ENCODE measurements at regions of chr1 and their contacts with region 1.

Region 1: DNA sequence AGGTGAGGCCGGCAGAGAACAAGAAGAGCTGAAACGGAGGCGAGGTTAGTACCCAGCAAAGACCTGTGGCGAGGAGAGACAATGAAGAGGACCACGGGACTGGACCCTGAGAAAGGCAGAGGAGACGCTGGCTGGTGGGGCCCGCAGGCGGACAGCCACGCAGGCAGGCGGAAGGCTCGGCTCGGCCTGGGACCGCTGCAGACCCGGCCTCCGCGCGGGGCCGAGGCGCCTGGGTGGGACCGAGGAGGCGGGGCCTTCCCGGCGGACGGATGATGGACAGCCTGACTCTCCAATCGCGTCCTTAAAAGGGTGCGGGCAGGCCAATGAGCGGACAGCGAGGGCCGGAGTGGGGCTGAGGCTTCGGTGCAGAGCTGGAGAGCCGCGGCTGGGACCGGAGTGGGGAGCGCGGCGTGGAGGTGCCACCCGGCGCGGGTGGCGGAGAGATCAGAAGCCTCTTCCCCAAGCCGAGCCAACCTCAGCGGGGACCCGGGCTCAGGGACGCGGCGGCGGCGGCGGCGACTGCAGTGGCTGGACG is at the start of gene MPZL1:
- DNase-seq: peak; percentile 92 to 98 (median 96)
- ATAC-seq: peak; percentile 96 to 99 (median 98)
- H3K4me3 ChIP-seq: peak within 1 kb of the TSS; percentile 88 to 97 (median 92)
- H3K27ac ChIP-seq: peak within 1 kb of the TSS; percentile 74 to 88 (median 82)
- H3K4me1 ChIP-seq: peaks cover 0 to 17% (median 14%) of the 10 kb centered on the region in 3 donors
- H3K27me3 ChIP-seq: no peaks in the 10 kb centered on the region
- CTCF ChIP-seq: no peak
- total RNA-seq, gene MPZL1: 17.3 to 46.6 (median 23.5) TPM

Region 2: DNA sequence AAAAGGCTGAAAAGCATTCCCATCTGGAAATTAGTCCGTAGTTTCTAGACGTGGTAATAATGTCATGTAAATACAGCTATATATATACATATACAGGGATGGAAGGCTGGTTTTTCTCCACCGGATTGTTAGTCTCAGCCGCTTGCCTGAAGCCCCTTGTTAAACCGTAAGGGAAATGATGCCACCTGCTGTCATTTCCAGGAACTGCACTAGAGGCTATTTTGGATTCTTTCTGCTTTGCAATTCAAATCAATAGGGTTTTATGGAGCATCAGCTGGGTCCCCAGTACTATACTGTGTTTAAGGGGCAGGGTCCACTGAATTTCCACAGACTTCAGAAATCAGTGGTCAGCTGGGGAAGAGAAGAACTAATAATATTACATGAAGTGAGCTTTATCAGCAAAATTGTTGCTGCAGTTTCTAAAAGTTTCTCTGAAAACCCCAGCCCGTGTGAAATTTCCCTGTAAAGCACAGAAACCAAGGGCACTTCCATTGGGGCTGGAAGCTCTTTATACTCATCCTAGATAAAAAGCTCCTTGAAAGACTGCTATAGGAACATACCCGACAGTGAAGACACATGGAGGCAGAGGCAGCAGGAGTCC is 33.7 kb before region 1 on chr1:
- intact Hi-C with region 1: no loop called
- DNase-seq: peak in 4 of 6 donors; percentile 44 to 78 (median 52)
- ATAC-seq: peak; percentile 70 to 92 (median 84)
- H3K4me3 ChIP-seq: no peak overlapping the region
- H3K27ac ChIP-seq: no peak overlapping the region
- H3K4me1 ChIP-seq: no peaks in the 10 kb centered on the region
- H3K27me3 ChIP-seq: no peaks in the 10 kb centered on the region
- CTCF ChIP-seq: peak; percentile 78 to 89 (median 81)

Region 3: GRCh38 chr1:167803358-167804207 is 81.9 kb after region 1 on chr1:
- intact Hi-C with region 1: loop called in 1 of 3 experiments (anchors 10 kb)
- DNase-seq: peak; percentile 71 to 96 (median 89)
- ATAC-seq: peak; percentile 96 to 99 (median 99)
- H3K4me3 ChIP-seq: no peak overlapping the region
- H3K27ac ChIP-seq: no peak overlapping the region
- H3K4me1 ChIP-seq: no peaks in the 10 kb centered on the region
- H3K27me3 ChIP-seq: no peaks in the 10 kb centered on the region
- CTCF ChIP-seq: peak; percentile 89 to 97 (median 96)

Region 4: DNA sequence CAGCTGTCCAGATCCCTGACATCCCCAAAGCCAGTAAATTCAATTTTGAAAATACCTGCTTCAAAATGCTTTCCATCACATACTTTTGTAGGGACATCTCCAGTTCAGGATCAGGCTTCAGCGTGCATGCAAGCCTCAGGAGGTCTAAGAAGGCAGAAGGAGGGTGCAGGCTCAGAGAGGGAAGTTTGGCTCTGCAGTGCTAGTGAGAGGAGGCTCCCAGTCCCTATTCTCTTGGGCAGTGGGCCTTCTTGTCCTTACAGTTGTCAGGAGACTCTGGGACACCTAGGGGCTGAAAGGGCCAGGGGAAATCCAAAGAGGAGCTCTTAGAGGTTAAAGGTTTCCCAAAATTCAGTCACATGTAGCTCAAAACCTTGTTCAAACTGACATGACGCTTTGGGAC is 172.1 kb after region 1 on chr1:
- intact Hi-C with region 1: no loop called
- DNase-seq: no peak
- ATAC-seq: peak in 1 of 4 donors; percentile 30
- H3K4me3 ChIP-seq: no peak overlapping the region
- H3K27ac ChIP-seq: no peak overlapping the region
- H3K4me1 ChIP-seq: no peaks in the 10 kb centered on the region
- H3K27me3 ChIP-seq: no peaks in the 10 kb centered on the region
- CTCF ChIP-seq: no peak

Region 5: GRCh38 chr1:167936068-167936929 is 214.6 kb after region 1 on chr1 and contains the start of gene DCAF6:
- intact Hi-C with region 1: no loop called
- DNase-seq: peak; percentile 87 to 98 (median 98)
- ATAC-seq: peak; percentile 87 to 94 (median 91)
- H3K4me3 ChIP-seq: peak within 1 kb of the TSS; percentile 75 to 84 (median 81)
- H3K27ac ChIP-seq: peak within 1 kb of the TSS; percentile 89 to 97 (median 96)
- H3K4me1 ChIP-seq: peaks cover 0 to 26% (median 10%) of the 10 kb centered on the region in 3 donors
- H3K27me3 ChIP-seq: no peaks in the 10 kb centered on the region
- CTCF ChIP-seq: no peak
- total RNA-seq, gene DCAF6: 11.4 to 31.9 (median 20.0) TPM

Region 6: GRCh38 chr1:168032029-168032428 is 310.3 kb after region 1 on chr1:
- intact Hi-C with region 1: no loop called
- DNase-seq: no peak
- ATAC-seq: peak in 1 of 4 donors; percentile 34
- H3K4me3 ChIP-seq: no peak overlapping the region
- H3K27ac ChIP-seq: no peak overlapping the region
- H3K4me1 ChIP-seq: no peaks in the 10 kb centered on the region
- H3K27me3 ChIP-seq: no peaks in the 10 kb centered on the region
- CTCF ChIP-seq: no peak

Measured in pancreas (tissue), 10 donors.